ENCODE measurements at regions of chr4 and their contacts with region 1.

Region 1: DNA sequence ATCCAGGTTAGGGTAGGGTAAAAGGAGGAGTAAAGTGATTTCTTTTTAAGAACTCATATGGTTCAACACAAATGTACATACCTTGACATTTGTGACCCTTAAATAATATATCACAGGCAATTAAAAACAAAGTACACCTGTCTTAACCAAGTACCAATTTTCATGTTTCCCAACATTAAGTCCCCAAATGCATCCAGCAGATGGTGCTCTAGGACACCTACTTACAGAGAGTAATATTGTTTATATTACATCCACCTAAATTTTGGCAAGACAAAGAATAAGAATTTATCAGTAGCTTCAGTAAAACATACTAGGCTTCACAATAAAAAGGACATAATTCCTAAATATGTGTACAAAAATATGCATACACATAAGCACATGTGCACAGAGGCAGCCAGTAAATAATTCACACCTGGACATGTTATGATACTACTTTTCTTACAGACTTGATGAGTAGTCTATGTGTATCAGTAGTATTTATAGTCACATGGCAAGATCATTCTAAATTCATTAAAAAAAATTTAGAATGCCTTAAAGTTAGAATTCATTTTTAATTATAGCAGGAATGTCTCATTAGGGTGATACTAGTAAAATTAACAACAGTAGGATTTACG is 219.7 kb downstream of the DCLK2 start:
- ATAC-seq: peak in 3 of 8 experiments; percentile 28 to 66 (median 52)
- H3K4me3 ChIP-seq: no peak overlapping the region
- H3K27ac ChIP-seq: no peak overlapping the region
- H3K4me1 ChIP-seq: peaks cover 0 to 2% of the 10 kb centered on the region in 2 donors

Region 2: GRCh38 chr4:150593996-150594395 is 296.0 kb after region 1 on chr4:
- in situ Hi-C with region 1: loop called in 1 of 9 experiments (anchors 25 kb)
- ATAC-seq: peak in 1 of 8 experiments; percentile 23
- H3K4me3 ChIP-seq: no peak overlapping the region
- H3K27ac ChIP-seq: no peak overlapping the region
- H3K4me1 ChIP-seq: peaks cover 0 to 9% of the 10 kb centered on the region in 2 donors

Measured in motor neuron (in vitro differentiated cells).